ENCODE measurements at regions of chr1 and their contacts with region 1.

Region 1: DNA sequence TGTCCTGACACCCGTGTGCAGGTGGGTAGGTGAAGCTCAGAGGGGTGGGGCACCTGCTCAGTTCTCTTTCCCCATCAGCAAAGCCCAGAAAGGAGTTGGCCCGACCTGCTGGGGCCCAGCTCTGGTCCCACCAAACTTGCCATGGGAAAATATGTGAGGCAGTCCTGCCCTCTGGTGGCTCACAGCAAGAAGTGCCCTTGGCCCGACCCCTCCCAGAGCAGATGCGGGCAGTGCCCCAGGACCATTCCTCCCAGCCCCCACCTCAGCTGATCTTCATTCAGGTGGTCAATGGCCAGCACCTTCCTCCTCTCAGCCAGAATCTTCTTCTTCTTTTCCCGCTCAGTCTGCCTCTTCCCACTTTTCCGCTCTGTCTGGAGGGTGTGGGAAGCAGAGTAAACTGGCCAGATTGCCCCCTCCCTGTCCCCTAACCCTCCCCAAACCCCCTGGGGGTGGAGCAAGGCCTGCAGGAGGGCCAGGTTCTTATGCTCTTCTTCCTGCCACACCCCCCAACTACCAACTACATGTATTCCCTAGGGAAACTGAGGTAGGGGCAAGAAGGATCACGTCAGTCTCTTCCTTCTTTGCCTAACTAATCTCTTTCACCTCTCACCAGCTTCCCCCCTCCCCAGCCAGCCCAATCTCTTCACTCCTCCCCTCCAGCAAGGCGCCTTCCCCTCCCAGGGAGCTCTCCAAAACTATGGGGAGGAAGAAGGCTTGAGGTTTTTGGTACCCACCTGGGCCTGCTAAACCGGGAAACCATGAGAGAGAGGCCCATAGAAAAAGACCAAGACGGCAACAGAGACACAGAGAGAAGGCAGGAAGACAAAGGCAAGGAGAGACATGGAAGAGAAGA is 15.6 kb downstream of the TNNT2 start:
- DNase-seq: peak in 3 of 5 donors; percentile 51 to 57 (median 56)
- ATAC-seq: peak in 2 of 4 donors; percentile 2 to 10
- H3K4me3 ChIP-seq: no peak overlapping the region
- H3K27ac ChIP-seq: peak overlapping the region in 5 of 12 donors; percentile 30 to 58 (median 48)
- H3K4me1 ChIP-seq: peaks cover 0 to 21% (median 3%) of the 10 kb centered on the region in 12 donors
- H3K27me3 ChIP-seq: no peaks in the 10 kb centered on the region
- CTCF ChIP-seq: peak; percentile 56 to 77 (median 71)
- POLR2A ChIP-seq: peak in 1 of 2 donors; percentile 30

Region 2: GRCh38 chr1:200741551-200742207 is 620.2 kb before region 1 on chr1:
- intact Hi-C with region 1: no loop called
- DNase-seq: no peak
- ATAC-seq: no peak
- H3K4me3 ChIP-seq: peak overlapping the region in 10 of 12 donors; percentile 77 to 98 (median 92)
- H3K27ac ChIP-seq: peak overlapping the region in 1 of 12 donors; percentile 8
- H3K4me1 ChIP-seq: peaks cover 0 to 51% (median 36%) of the 10 kb centered on the region in 12 donors
- H3K27me3 ChIP-seq: no peaks in the 10 kb centered on the region
- CTCF ChIP-seq: no peak
- POLR2A ChIP-seq: no peak

Region 3: GRCh38 chr1:201310986-201311355 is 50.9 kb before region 1 on chr1:
- intact Hi-C with region 1: no loop called
- DNase-seq: peak in 4 of 5 donors; percentile 41 to 60 (median 51)
- ATAC-seq: peak; percentile 24 to 62 (median 38)
- H3K4me3 ChIP-seq: no peak overlapping the region
- H3K27ac ChIP-seq: peak overlapping the region in 8 of 12 donors; percentile 8 to 61 (median 40)
- H3K4me1 ChIP-seq: peaks cover 0 to 42% (median 25%) of the 10 kb centered on the region in 12 donors
- H3K27me3 ChIP-seq: peaks cover 0 to 7% (median 0%) of the 10 kb centered on the region in 9 donors
- CTCF ChIP-seq: no peak
- POLR2A ChIP-seq: no peak

Region 4: DNA sequence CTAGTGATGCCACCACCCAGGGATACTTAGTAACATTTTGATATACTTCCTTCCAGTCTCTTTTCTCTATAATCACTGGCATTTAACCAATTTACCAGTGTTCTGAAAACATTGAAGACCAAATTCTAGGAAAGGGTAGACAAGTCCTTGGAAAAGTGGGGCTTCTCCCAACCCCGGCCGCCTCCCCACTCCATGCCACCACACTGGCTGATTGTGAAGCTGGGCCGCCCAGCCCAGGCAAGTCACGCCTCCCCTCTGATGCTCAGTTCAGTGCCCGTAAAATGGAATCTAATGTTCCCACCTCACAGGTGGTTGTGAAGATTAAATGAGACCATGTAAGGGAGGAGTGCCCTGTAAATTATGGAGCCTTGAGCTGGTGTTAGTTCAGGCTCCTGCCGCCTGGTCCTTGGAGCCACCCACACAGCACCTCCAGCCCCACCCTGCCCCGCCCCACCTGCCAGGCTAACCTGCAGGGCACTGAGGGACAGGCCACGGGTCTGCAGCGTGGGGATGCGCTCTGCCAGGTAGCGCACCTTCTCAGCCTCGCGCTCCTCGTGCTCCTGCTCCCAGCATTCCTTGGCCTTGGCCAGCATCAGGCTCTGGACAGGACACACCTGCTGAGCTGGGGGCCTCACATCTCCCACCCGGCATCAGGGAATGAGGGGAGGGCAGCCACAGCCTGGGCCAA is 52.3 kb after region 1 on chr1:
- intact Hi-C with region 1: loop called in 1 of 10 experiments (anchors 5 kb)
- DNase-seq: no peak
- ATAC-seq: no peak
- H3K4me3 ChIP-seq: no peak overlapping the region
- H3K27ac ChIP-seq: no peak overlapping the region
- H3K4me1 ChIP-seq: peaks cover 0 to 1% (median 0%) of the 10 kb centered on the region in 12 donors
- H3K27me3 ChIP-seq: no peaks in the 10 kb centered on the region
- CTCF ChIP-seq: no peak
- POLR2A ChIP-seq: no peak